Dorsolateral prefrontal cortex (tissue), 120 donors: ENCODE measurements at regions of chr1 and their contacts with region 1.

Region 1: GRCh38 chr1:88549536-88549935 is 134.5 kb upstream of the PKN2 start:
- DNase-seq: no peak
- H3K4me3 ChIP-seq: peak overlapping the region in 5 of 59 donors; percentile 4 to 12 (median 8)
- H3K27ac ChIP-seq: no peak overlapping the region
- H3K27me3 ChIP-seq: no peaks in the 10 kb centered on the region
- CTCF ChIP-seq: peak; percentile 47 to 79 (median 62)

Region 2: DNA sequence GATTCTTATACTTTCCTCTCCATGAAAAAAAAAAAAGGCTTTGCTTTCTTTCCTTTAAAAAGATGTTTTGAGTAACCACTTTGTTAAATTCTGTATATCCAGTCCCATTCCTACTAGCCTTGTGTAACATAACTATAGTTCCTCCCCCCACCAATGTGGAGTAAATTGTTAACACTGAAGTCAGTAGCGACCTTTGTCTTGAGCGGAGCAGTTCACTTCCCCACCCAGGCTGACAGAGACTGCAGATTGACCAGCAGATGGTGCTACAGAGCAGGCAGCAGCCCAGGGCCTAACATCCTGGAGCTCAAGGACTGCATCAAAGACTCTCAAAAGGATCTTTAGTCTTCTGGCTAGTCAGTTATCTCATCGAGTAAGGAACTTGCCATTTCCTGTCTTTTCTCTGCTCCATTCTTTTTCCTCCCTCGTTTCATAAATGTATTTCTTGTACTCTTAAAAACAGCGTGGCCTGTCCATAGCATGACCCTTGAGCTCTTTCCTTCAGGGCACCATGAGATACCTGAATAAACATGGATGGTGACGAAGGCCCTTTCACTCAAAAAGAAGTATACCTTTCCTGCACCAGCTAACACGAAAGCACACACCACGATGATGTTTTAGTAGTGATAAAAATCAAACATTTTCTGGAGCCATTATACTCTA is 369.0 kb before region 1 on chr1:
- intact Hi-C with region 1: loop called in 1 of 2 experiments (anchors 5 kb)
- DNase-seq: peak; percentile 36 to 83 (median 72)
- H3K4me3 ChIP-seq: no peak overlapping the region
- H3K27ac ChIP-seq: peak overlapping the region in 24 of 59 donors; percentile 1 to 66 (median 22)
- H3K27me3 ChIP-seq: no peaks in the 10 kb centered on the region
- CTCF ChIP-seq: peak; percentile 32 to 98 (median 91)

Region 3: DNA sequence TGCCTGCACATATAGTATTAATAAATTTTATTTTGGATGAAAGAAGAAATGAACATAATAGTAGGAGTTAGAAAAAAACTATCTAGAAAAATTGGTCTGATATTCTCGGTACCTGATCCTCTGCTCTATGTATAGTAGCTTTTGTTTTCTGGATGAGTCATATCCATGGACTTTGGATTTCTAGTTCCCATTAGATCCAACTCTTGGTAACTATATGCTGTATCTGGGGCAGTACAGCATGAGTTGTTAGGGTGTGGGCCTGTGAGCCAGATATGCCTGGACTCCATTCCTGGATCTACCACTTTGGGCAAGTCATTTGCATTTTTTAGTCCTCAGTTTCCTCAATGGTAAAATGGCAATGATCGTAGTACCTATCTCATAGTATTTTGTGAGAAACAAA is 237.6 kb before region 1 on chr1:
- intact Hi-C with region 1: loop called in 1 of 2 experiments (anchors 10 kb)
- DNase-seq: no peak
- H3K4me3 ChIP-seq: no peak overlapping the region
- H3K27ac ChIP-seq: no peak overlapping the region
- H3K27me3 ChIP-seq: no peaks in the 10 kb centered on the region
- CTCF ChIP-seq: no peak

Region 4: GRCh38 chr1:88371396-88371795 is 178.1 kb before region 1 on chr1:
- intact Hi-C with region 1: no loop called
- DNase-seq: no peak
- H3K4me3 ChIP-seq: no peak overlapping the region
- H3K27ac ChIP-seq: no peak overlapping the region
- H3K27me3 ChIP-seq: no peaks in the 10 kb centered on the region
- CTCF ChIP-seq: no peak

Region 5: GRCh38 chr1:88399690-88400089 is 149.8 kb before region 1 on chr1:
- intact Hi-C with region 1: loop called in 1 of 2 experiments (anchors 5 kb)
- DNase-seq: no peak
- H3K4me3 ChIP-seq: no peak overlapping the region
- H3K27ac ChIP-seq: no peak overlapping the region
- H3K27me3 ChIP-seq: no peaks in the 10 kb centered on the region
- CTCF ChIP-seq: no peak

Region 6: GRCh38 chr1:88462488-88463261 is 86.9 kb before region 1 on chr1:
- intact Hi-C with region 1: loop called in 1 of 2 experiments (anchors 5 kb)
- DNase-seq: peak; percentile 12 to 83 (median 72)
- H3K4me3 ChIP-seq: peak overlapping the region; percentile 35 to 74 (median 59)
- H3K27ac ChIP-seq: peak overlapping the region; percentile 25 to 98 (median 95)
- H3K27me3 ChIP-seq: no peaks in the 10 kb centered on the region
- CTCF ChIP-seq: peak in 21 of 56 donors; percentile 5 to 38 (median 18)

Region 7: DNA sequence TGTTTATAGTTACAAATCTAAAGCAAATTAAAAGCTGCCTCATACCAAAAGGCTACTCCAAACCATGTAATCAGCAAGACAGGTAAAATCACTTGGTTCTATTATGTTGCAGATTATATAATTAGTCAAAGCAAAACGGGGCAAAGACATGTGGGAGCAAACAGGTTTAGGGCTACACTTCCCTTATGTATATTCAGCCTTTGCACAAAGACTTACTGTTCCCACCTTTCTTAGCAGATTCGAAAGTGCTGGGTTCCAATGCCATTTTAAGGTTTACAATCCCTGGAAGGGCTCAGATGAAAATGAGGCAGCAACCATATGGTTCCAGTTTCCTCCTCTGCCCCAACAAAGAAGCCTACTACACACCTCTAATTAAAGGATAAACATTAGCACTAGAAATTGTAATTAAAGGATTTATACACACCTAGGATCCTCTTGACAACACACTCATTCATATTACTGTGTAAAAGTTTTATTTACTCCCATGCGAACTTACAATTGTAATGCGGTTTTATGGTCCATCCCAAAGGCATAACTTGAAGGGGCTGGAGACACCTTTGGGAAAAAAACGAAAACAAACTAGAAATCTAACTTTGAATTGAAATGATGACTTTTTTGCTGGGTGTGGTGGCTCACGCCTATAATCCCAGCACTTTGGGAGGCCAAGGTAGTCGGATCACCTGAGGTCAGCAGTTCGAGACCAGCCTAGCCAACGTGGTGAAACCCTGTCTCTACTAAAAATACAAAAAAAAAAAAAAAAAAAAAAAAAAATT is 17.3 kb after region 1 on chr1:
- intact Hi-C with region 1: no loop called
- DNase-seq: no peak
- H3K4me3 ChIP-seq: no peak overlapping the region
- H3K27ac ChIP-seq: no peak overlapping the region
- H3K27me3 ChIP-seq: no peaks in the 10 kb centered on the region
- CTCF ChIP-seq: no peak